Left cardiac atrium (tissue), 4 donors: ENCODE measurements at regions of chr9 and their contacts with region 1.

Region 1: GRCh38 chr9:135410831-135411473 is 68.6 kb upstream of the PPP1R26 start:
- DNase-seq: no peak
- ATAC-seq: no peak

Region 2: GRCh38 chr9:134698587-134699342 is 712.2 kb before region 1 on chr9:
- intact Hi-C with region 1: loop called in 1 of 2 experiments (anchors 10 kb)
- DNase-seq: peak; percentile 71
- ATAC-seq: peak; percentile 53 to 75

Region 3: GRCh38 chr9:135343837-135344522 is 67.0 kb before region 1 on chr9:
- intact Hi-C with region 1: loop called (anchors 5 kb)
- DNase-seq: peak; percentile 73
- ATAC-seq: peak; percentile 65 to 68

Region 4: DNA sequence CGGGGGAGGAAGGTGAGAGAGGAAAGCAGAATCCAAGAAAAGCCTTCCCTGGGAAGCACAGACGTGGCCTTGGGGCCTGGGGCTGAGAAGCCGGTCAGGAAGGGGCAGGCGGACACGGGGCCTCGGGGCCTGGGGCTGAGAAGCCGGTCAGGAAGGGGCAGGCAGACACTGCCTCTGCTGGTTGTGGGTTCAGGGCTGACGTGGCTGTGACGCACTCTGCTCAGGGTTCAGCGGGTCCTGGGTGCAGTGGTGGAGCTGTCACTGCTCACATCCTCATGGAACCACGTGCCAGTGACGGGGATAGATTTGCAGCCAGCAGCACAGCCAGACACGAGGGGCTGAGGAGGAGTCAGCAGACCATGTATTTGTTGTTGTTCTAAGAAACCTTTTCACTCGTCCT is 163.4 kb after region 1 on chr9:
- intact Hi-C with region 1: no loop called
- DNase-seq: no peak
- ATAC-seq: no peak

Region 5: GRCh38 chr9:135641745-135642144 is 230.8 kb after region 1 on chr9:
- intact Hi-C with region 1: no loop called
- DNase-seq: no peak
- ATAC-seq: no peak